GM18951 (cell line): ENCODE measurements at regions of chr7 and their contacts with region 1.

Region 1: GRCh38 chr7:117385340-117386109 is 41.8 kb downstream of the ASZ1 start:
- POLR2A ChIP-seq: no peak

Region 2: DNA sequence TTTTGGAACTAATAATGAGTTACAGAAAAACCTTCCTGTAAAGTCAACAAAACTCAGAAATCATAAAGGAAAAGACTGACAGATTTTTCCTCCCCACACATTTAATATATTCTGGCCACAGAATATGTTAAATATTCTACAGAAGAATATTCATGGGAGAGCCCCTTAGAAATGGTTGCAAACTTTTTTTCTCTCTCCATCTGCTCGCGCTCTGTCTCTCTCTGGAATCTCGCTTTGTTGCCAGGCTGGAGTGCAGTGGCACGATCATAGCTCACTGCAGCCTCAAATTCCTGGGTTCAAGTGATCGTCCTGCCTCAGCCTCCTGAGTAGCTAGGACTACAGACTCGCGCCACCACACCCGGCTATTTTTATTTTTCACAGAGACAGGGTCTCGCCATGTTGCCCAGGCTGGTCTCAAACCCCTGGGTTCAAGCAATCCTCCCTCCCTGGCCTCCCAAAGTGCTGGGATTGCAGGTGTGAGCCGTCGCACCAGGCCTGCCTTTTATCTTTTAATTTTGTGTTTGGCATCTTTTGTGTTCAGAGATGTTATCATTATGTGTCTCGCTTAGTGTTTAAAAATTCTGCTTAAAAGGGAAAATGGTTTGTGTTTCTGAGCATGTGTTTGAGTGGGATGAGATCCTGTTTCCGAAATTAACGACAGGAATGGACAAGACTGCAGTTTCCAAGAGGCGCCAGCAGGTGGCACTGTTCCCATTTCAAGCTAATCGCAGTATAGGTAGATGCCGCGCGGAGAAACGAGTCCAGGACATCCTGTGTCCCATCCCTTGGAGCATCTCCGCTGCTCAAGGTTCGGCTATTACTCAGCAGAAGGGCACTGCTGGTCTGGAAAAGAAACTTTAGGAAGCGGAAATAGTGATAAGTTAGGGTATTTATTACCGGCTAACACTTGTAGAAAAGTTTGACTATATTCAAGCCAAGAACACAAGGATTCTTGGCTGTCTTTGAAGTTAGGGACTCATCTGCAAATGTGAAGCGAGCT is 455.3 kb before region 1 on chr7:
- in situ Hi-C with region 1: loop called (anchors 25 kb)
- POLR2A ChIP-seq: no peak

Region 3: GRCh38 chr7:117212969-117213877 is 172.3 kb before region 1 on chr7:
- in situ Hi-C with region 1: loop called (anchors 25 kb)
- POLR2A ChIP-seq: no peak